ENCODE measurements at regions of chr10 and their contacts with region 1.

Region 1: DNA sequence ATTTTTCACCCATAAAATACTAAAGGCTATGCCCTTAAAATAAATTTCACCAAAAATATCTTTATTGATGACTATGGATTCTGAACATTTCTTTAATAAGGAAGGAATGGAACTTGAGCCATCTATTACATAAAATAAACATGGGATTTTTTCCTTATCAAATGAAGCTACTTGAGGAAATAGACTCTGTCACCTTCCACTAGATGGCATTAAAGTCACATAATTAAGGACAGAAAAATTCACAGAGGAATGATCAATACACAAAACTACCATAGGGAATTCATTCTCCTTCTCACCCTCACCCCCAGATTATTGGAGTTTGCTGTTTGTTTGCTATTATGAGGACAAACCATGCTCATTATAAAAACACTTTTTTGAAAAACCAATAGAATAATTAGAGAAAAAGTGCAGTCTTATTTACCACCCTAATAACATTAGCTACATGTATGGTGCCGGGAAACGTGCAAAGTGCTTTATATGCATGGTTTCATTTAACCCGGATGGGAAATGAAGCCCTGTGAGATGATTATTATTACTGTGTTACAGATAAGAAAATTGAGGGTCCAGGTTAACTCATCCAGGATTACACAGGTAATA is 21.1 kb upstream of the FOXI2 start:
- DNase-seq: peak in 2 of 14 experiments; percentile 19 to 24
- ATAC-seq: no peak
- H3K4me3 ChIP-seq: no peak overlapping the region
- H3K4me3 Mint-ChIP-seq: no peak overlapping the region
- H3K27ac ChIP-seq: no peak overlapping the region
- H3K27ac Mint-ChIP-seq: no peak overlapping the region
- H3K4me1 ChIP-seq: no peaks in the 10 kb centered on the region
- H3K4me1 Mint-ChIP-seq: no peaks in the 10 kb centered on the region
- H3K27me3 ChIP-seq: peaks cover 2 to 4% of the 10 kb centered on the region in 2 experiments
- H3K27me3 Mint-ChIP-seq: peaks cover 7% of the 10 kb centered on the region
- CTCF ChIP-seq: peak; percentile 34

Region 2: DNA sequence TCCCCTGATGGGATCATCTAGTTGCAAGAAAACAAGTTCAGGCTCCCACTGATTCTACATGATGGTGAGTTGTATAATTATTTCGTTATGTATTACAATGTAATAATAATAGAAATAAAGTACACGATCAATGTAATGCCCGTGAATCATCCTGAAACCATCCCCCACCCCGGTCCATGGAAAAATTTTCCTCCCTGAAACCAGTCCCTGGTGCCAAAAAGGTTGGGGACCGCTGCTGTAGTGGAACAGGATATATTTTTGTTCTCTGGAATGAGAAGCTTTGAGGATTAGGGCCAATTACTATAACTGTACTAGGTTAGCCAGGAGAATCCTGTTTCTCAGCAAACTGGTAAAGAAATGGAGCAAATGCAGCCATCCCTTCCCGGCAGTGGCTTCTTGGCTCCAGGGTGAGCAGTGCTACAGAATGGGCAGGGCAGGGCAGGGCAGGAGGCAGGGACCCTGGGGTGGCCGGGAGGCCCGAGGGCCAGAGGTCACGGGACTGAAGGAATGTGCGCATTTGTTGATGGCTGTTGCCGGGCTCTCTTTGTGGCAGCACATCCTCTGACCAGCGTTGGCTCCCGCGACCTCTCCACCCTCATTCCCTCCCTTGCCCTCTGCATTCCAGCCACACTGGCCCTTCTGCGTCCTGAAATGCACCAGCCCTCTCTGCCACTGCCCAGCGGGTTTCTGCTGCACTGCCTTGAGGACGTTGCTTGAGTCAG is 329.1 kb before region 1 on chr10:
- CTCF ChIA-PET with region 1: no interaction called
- POLR2A ChIA-PET with region 1: no interaction called
- intact Hi-C with region 1: no loop called
- DNase-seq: no peak
- ATAC-seq: no peak
- H3K4me3 ChIP-seq: no peak overlapping the region
- H3K4me3 Mint-ChIP-seq: no peak overlapping the region
- H3K27ac ChIP-seq: no peak overlapping the region
- H3K27ac Mint-ChIP-seq: no peak overlapping the region
- H3K4me1 ChIP-seq: no peaks in the 10 kb centered on the region
- H3K4me1 Mint-ChIP-seq: no peaks in the 10 kb centered on the region
- H3K27me3 ChIP-seq: no peaks in the 10 kb centered on the region
- H3K27me3 Mint-ChIP-seq: no peaks in the 10 kb centered on the region
- CTCF ChIP-seq: no peak

Region 3: DNA sequence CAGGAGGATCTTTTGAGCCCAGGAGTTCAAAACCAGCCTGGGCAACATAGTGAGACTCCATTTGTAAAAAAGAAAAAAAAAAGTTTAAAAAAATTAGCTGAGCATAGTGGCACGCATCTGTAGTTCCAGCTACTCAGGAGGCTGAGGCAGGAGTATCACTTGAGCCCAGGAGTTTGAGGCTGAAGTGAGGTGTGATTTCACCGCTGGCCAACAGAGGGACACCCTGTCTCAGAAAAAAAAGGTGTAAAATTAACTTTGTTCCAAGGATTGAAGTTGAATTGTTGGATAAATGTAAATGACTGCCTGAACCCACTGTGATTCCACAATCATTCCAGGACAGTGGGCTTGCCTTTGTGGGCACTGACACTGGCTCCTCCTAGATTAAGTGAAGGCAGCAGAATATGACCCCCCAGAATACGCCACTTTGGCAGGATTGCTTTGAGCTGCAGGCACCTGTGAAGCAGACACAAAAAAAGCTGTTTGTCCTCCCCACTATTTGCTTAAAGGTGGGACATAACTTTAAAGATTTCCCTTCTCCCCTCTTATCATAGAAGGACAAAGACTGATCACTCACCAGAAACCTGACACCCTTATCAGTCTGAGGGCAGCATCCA is 36.1 kb before region 1 on chr10:
- CTCF ChIA-PET with region 1: no interaction called
- POLR2A ChIA-PET with region 1: no interaction called
- intact Hi-C with region 1: no loop called
- DNase-seq: no peak
- ATAC-seq: no peak
- H3K4me3 ChIP-seq: no peak overlapping the region
- H3K4me3 Mint-ChIP-seq: no peak overlapping the region
- H3K27ac ChIP-seq: no peak overlapping the region
- H3K27ac Mint-ChIP-seq: no peak overlapping the region
- H3K4me1 ChIP-seq: no peaks in the 10 kb centered on the region
- H3K4me1 Mint-ChIP-seq: no peaks in the 10 kb centered on the region
- H3K27me3 ChIP-seq: no peaks in the 10 kb centered on the region
- H3K27me3 Mint-ChIP-seq: no peaks in the 10 kb centered on the region
- CTCF ChIP-seq: no peak

Region 4: GRCh38 chr10:127813290-127813689 is 97.4 kb after region 1 on chr10:
- CTCF ChIA-PET with region 1: no interaction called
- POLR2A ChIA-PET with region 1: no interaction called
- intact Hi-C with region 1: loop called in 1 of 2 experiments (anchors 10 kb)
- DNase-seq: no peak
- ATAC-seq: no peak
- H3K4me3 ChIP-seq: no peak overlapping the region
- H3K4me3 Mint-ChIP-seq: no peak overlapping the region
- H3K27ac ChIP-seq: no peak overlapping the region
- H3K27ac Mint-ChIP-seq: no peak overlapping the region
- H3K4me1 ChIP-seq: no peaks in the 10 kb centered on the region
- H3K4me1 Mint-ChIP-seq: no peaks in the 10 kb centered on the region
- H3K27me3 ChIP-seq: peaks cover 0 to 2% of the 10 kb centered on the region in 2 experiments
- H3K27me3 Mint-ChIP-seq: peaks cover 22% of the 10 kb centered on the region
- CTCF ChIP-seq: no peak

Region 5: GRCh38 chr10:127889605-127890195 is 173.8 kb after region 1 on chr10:
- CTCF ChIA-PET with region 1: no interaction called
- POLR2A ChIA-PET with region 1: no interaction called
- intact Hi-C with region 1: no loop called
- DNase-seq: peak in 1 of 14 experiments; percentile 44
- ATAC-seq: no peak
- H3K4me3 ChIP-seq: no peak overlapping the region
- H3K4me3 Mint-ChIP-seq: no peak overlapping the region
- H3K27ac ChIP-seq: no peak overlapping the region
- H3K27ac Mint-ChIP-seq: no peak overlapping the region
- H3K4me1 ChIP-seq: no peaks in the 10 kb centered on the region
- H3K4me1 Mint-ChIP-seq: no peaks in the 10 kb centered on the region
- H3K27me3 ChIP-seq: no peaks in the 10 kb centered on the region
- H3K27me3 Mint-ChIP-seq: peaks cover 4% of the 10 kb centered on the region
- CTCF ChIP-seq: no peak